OCI-LY7 (cell line): ENCODE measurements at regions of chr2 and their contacts with region 1.

Region 1: GRCh38 chr2:50995610-50996009 is 36.3 kb downstream of the NRXN1 start:
- DNase-seq: no peak
- H3K4me3 ChIP-seq: no peak overlapping the region
- H3K27ac ChIP-seq: no peak overlapping the region
- H3K4me1 ChIP-seq: no peaks in the 10 kb centered on the region
- CTCF ChIP-seq: no peak

Region 2: DNA sequence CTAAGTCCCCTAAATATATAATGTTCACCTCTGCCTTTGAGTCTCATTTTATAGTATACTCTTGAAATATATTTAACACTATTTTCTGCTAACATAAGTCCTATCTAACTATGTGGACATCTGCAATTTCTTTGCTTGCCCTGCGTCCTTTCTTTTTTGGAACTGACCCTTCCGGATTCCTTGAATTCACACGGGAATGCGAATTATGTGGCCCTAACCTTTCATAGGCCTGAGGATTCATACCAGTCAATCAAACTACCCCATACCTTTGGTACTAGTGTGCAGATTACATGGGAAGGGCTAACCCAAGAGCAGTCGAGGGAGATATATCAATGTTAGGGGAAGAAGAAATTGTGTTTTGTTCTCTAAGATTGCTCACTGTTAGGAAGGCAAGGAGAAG is 20.1 kb before region 1 on chr2:
- CTCF ChIA-PET with region 1: no interaction called
- POLR2A ChIA-PET with region 1: interaction called, 10 read pairs
- intact Hi-C with region 1: no loop called
- DNase-seq: no peak
- H3K4me3 ChIP-seq: no peak overlapping the region
- H3K27ac ChIP-seq: no peak overlapping the region
- H3K4me1 ChIP-seq: no peaks in the 10 kb centered on the region
- CTCF ChIP-seq: no peak